Right cardiac atrium (tissue), 5 donors: ENCODE measurements at regions of chr7 and their contacts with region 1.

Region 1: DNA sequence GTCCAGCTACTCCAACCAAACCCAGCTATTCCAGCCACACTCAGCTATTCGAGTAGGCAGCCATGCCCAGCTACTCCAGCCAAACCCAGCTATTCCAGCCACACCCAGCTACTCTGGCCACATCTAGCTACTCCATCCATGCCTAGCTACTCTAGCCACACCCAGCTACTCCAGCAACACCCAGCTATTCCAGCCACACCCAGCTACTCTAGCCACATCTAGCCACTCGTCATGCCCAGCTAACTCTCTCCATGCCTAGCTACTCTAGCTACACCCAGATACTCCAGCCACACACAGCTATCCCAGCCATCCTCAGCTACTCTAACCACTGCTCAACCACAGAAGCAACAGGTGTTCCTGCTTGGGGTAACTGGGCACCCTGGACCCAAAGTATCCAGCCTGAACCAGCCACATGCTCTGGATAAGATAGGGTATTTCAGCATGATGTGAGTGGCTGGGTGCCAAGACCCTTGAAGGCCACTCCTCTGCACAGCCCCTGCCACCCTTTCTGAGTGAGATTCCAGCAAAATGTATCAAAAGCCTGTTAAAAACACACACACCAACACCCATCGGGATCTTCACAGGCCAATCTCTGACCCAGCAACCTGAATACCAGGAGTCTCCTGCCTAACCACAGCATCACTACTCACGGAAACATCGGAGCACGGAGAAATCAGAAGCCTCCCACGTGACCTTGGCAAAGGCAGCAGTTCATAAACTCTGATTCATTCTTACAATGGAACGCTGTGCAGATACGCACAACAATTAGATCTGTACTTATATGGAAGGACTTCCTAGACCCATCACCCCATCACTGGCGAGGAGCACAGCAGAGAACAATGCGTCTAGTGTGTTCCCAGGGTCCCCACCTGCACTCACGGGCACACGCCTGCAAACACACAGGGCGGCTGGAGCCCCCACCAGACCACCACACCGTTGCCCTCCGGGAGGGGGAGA is 51.8 kb upstream of the DNAAF5 start:
- DNase-seq: peak; percentile 24 to 58 (median 30)
- ATAC-seq: peak in 1 of 2 donors; percentile 77
- H3K4me3 ChIP-seq: no peak overlapping the region
- H3K27ac ChIP-seq: no peak overlapping the region
- H3K4me1 ChIP-seq: no peaks in the 10 kb centered on the region
- H3K27me3 ChIP-seq: no peaks in the 10 kb centered on the region

Region 2: DNA sequence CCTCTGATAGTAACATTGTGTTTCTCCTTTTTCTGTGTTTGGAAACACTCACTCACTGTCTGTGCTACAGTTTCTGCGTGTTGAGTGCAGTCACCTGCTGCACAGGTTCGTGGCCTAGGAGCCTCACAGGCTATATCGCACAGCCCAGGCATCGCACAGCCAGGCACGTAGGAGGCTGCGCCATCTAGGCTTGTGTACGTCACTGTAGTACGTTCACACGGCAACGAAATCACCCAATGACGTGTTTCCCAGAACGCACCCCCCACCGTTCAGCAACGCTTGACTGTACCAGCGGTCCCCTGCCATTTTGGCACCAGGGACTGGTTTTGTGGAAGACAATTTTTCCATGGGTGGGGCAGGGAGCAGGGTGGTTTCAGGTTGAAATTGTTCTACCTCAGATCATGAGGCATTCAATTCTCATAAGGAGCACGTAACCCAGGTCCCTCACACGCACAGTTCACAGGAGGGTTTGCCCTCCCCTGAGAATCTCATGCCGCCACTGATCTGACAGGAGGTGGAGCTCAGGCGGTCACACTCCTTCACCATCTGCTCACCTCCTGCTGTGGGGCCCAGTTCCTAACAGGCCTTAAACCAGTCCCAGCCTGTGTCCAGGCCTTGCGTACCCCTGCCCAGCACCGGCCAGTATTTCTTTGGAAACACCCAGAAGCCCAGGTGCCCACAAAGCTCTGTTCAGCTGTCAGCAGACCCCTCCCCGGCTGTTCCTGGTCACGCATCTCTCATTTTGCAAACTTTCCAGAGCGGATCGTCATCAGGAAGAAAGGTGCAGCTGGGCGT is 75.6 kb after region 1 on chr7:
- intact Hi-C with region 1: loop called in 1 of 4 experiments (anchors 10 kb)
- DNase-seq: peak in 2 of 3 donors; percentile 10 to 39
- ATAC-seq: no peak
- H3K4me3 ChIP-seq: no peak overlapping the region
- H3K27ac ChIP-seq: no peak overlapping the region
- H3K4me1 ChIP-seq: peaks cover 5% of the 10 kb centered on the region
- H3K27me3 ChIP-seq: no peaks in the 10 kb centered on the region